ENCODE measurements at regions of chr9 and their contacts with region 1.

Region 1: GRCh38 chr9:108761655-108762347 is 94.0 kb downstream of the ACTL7B start:
- DNase-seq: peak; percentile 43
- H3K4me3 ChIP-seq: no peak overlapping the region
- H3K27ac ChIP-seq: no peak overlapping the region
- H3K4me1 ChIP-seq: no peaks in the 10 kb centered on the region
- H3K27me3 ChIP-seq: peaks cover 0 to 1% of the 10 kb centered on the region in 2 experiments
- CTCF ChIP-seq: peak; percentile 80 to 81
- POLR2A ChIP-seq: no peak

Region 2: GRCh38 chr9:107137495-107138202 is 1624.2 kb before region 1 on chr9:
- CTCF ChIA-PET with region 1: interaction called, 4 read pairs
- POLR2A ChIA-PET with region 1: no interaction called
- dilution Hi-C with region 1: no loop called
- intact Hi-C with region 1: loop called (anchors 5 kb)
- DNase-seq: peak; percentile 17
- H3K4me3 ChIP-seq: no peak overlapping the region
- H3K27ac ChIP-seq: no peak overlapping the region
- H3K4me1 ChIP-seq: no peaks in the 10 kb centered on the region
- H3K27me3 ChIP-seq: no peaks in the 10 kb centered on the region
- CTCF ChIP-seq: peak; percentile 54 to 67
- POLR2A ChIP-seq: no peak

Region 3: DNA sequence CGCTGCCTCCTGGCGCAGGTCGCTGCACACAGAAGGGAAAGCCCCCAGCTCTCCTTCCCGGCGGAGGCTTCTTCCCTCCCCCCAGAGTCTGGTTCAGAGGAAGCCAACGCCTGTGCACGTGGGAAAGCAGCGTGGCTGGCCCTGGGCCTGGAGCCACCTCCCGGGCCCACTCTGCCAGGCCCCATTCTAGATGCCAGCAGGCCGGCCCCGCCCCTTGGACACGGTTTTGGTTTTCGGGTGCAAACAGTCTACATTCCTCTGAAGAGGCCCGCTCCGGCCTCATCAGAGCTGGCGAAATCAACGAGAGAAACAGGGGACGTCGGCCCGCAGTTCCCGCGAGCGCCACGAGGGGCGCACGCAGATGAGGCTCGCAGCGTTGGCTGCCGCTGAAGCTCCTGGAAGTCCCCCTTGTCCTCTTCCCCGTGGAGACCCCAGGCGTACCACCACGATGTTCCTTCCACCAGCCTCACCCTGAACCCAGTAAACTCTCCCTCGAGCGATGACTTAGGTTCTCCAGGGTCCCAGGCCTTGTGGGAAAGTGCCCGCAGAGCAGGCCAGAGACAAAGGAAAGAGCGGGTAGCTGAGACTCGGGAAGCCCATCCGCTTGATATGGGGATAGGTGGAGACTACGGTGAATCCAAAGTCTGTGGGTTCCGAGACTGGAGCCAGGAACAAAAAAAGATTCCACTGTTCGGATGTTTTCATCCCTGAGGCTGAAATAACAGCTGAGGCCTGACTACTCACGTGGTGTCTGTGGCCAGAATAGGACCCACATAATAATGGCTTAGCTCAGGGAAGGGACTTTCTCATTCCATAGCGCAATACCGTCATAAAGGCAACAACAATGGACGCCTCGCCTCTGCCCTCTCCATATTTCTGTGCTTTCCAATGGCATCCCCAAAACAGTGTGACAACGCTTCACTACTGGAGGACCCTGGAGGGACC is 1336.4 kb before region 1 on chr9:
- CTCF ChIA-PET with region 1: interaction called, 23 read pairs
- POLR2A ChIA-PET with region 1: no interaction called
- dilution Hi-C with region 1: no loop called
- intact Hi-C with region 1: loop called (anchors 1 kb)
- DNase-seq: peak; percentile 65
- H3K4me3 ChIP-seq: peak overlapping the region in 1 of 3 experiments; percentile 12
- H3K27ac ChIP-seq: no peak overlapping the region
- H3K4me1 ChIP-seq: peaks cover 4% of the 10 kb centered on the region
- H3K27me3 ChIP-seq: no peaks in the 10 kb centered on the region
- CTCF ChIP-seq: peak; percentile 98 to 99
- POLR2A ChIP-seq: no peak

Region 4: DNA sequence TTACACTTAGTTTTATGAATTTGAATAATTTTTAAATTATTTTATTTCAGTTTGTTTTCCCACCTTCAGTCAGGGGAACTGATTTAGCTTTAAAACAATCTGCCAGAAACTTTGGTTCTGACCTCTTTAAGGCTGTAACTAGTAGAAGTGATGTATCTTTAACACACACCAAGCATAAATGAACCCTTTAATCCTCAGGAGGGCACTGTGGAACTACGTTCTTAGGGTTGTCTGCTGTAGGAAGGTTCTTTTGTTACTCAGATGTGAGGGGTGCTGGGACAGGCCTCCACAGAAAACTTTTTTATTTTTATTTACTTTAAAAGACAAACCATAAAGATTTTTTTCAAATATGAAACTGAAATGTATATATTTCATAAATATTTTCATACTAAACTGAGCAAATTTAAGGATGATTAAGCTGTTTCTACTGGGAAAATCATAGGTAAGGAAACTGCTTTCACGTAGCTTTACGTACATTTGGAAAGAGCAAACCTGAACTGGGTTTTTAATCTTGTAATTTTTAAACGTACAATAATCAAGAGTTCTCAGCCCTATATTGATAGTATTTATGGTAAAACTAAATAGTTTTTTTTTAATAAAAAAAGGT is 1277.6 kb before region 1 on chr9:
- CTCF ChIA-PET with region 1: interaction called, 12 read pairs
- POLR2A ChIA-PET with region 1: no interaction called
- dilution Hi-C with region 1: no loop called
- intact Hi-C with region 1: loop called (anchors 1 kb)
- DNase-seq: peak; percentile 84
- H3K4me3 ChIP-seq: no peak overlapping the region
- H3K27ac ChIP-seq: no peak overlapping the region
- H3K4me1 ChIP-seq: peaks cover 8% of the 10 kb centered on the region
- H3K27me3 ChIP-seq: peaks cover 3 to 8% of the 10 kb centered on the region in 2 experiments
- CTCF ChIP-seq: peak; percentile 36 to 45
- POLR2A ChIP-seq: no peak

Region 5: GRCh38 chr9:108468402-108468801 is 293.4 kb before region 1 on chr9:
- CTCF ChIA-PET with region 1: no interaction called
- POLR2A ChIA-PET with region 1: no interaction called
- dilution Hi-C with region 1: no loop called
- intact Hi-C with region 1: loop called (anchors 2 kb)
- DNase-seq: peak; percentile 36
- H3K4me3 ChIP-seq: no peak overlapping the region
- H3K27ac ChIP-seq: no peak overlapping the region
- H3K4me1 ChIP-seq: peaks cover 9% of the 10 kb centered on the region
- H3K27me3 ChIP-seq: no peaks in the 10 kb centered on the region
- CTCF ChIP-seq: peak; percentile 62 to 63
- POLR2A ChIP-seq: no peak

Region 6: GRCh38 chr9:108953983-108954574 is 192.3 kb after region 1 on chr9:
- CTCF ChIA-PET with region 1: interaction called, 6 read pairs
- POLR2A ChIA-PET with region 1: no interaction called
- dilution Hi-C with region 1: no loop called
- intact Hi-C with region 1: loop called (anchors 5 kb)
- DNase-seq: peak; percentile 78
- H3K4me3 ChIP-seq: no peak overlapping the region
- H3K27ac ChIP-seq: no peak overlapping the region
- H3K4me1 ChIP-seq: peaks cover 20% of the 10 kb centered on the region
- H3K27me3 ChIP-seq: no peaks in the 10 kb centered on the region
- CTCF ChIP-seq: peak in 1 of 2 donors; percentile 34
- POLR2A ChIP-seq: no peak